ENCODE measurements at regions of chr1 and their contacts with region 1.

Region 1: DNA sequence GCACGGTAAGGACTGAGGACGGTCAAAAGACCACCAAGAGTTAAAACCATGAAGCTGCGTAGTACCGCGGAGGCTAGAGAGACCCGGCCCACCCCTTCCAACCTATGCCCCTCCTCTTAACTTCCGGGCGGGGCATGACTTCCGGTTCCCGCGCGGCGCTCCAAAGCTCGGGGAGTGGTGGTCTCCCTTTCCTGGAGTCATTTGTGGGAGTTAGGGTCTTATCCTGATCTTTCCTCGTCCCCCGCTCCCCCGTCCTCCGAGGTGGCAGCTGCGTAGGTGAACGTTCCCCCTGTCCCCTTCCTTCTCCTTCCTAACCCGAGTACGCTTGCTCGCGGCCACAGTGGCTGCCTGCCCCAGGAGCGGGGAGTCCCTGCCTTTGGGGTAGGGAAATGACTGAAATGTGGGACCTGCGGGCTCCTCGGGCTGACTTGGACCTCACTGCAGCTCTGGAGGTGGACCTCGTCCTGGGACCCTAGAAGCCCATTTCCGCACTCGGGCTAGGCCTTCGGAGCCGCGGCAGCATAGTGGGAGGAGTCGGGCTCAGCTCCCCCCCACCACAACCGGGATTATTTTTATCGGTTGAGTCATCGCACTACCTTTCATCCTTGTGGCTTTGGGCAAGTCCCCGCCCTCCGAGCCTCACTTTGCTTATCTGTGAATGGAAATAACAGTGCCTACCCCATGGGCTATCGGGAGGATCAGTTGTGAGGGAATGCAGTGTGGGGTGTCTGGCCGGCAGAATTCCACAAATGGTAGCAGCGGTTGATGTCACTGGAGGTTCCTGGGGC is 24.1 kb downstream of the CELA3A start:
- DNase-seq: peak; percentile 92
- H3K4me3 ChIP-seq: peak overlapping the region; percentile 96
- H3K27ac ChIP-seq: peak overlapping the region; percentile 83
- H3K4me1 ChIP-seq: peaks cover 14% of the 10 kb centered on the region
- CTCF ChIP-seq: no peak

Region 2: DNA sequence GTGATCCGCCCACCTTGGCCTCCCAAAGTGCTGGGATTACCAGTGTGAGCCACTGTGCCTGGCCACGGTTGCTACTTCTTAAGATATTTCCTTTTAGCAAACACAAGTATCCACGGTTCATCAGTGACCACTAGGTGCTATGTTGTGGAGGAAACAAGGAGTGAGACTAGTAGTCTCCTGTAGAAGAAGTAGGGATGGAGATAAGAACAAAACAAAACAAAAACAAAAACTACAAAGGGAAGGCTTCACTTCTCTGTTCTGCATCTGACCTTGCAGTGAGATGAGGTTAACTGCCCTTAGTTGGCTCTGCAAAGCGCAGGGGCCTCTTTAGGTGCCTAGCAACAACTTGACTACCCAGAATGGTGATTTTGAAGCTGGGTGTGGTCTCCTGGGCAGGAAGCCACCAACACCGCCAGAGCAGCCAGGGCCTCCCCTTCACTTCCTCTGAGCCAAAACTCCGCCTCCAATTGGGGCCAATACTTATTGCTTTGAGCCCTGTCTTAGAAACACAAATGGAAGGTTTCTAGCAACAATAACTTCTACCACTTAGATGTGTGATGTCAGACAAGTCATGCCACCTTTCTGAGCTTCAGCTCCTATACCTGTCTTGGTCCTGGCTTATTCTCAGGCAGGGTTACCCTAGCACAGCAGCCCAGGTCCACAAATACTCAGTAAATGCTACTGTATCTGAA is 14.2 kb after region 1 on chr1:
- CTCF ChIA-PET with region 1: interaction called, 3 read pairs
- POLR2A ChIA-PET with region 1: interaction called, 15 read pairs
- intact Hi-C with region 1: no loop called
- DNase-seq: peak; percentile 92
- H3K4me3 ChIP-seq: peak overlapping the region; percentile 34
- H3K27ac ChIP-seq: peak overlapping the region; percentile 77
- H3K4me1 ChIP-seq: peaks cover 59% of the 10 kb centered on the region
- CTCF ChIP-seq: peak; percentile 51

Region 3: GRCh38 chr1:22773981-22774832 is 748.6 kb after region 1 on chr1:
- CTCF ChIA-PET with region 1: no interaction called
- POLR2A ChIA-PET with region 1: no interaction called
- intact Hi-C with region 1: no loop called
- DNase-seq: no peak
- H3K4me3 ChIP-seq: no peak overlapping the region
- H3K27ac ChIP-seq: no peak overlapping the region
- H3K4me1 ChIP-seq: no peaks in the 10 kb centered on the region
- CTCF ChIP-seq: no peak

Measured in OCI-LY7 (cell line).